ENCODE measurements at regions of chr2 and their contacts with region 1.

Region 1: GRCh38 chr2:144063602-144064001 is 456.3 kb downstream of the ZEB2 start:
- DNase-seq: no peak
- H3K4me3 ChIP-seq: no peak overlapping the region
- H3K27ac ChIP-seq: no peak overlapping the region
- H3K4me1 ChIP-seq: no peaks in the 10 kb centered on the region
- H3K27me3 ChIP-seq: no peaks in the 10 kb centered on the region
- CTCF ChIP-seq: no peak

Region 2: DNA sequence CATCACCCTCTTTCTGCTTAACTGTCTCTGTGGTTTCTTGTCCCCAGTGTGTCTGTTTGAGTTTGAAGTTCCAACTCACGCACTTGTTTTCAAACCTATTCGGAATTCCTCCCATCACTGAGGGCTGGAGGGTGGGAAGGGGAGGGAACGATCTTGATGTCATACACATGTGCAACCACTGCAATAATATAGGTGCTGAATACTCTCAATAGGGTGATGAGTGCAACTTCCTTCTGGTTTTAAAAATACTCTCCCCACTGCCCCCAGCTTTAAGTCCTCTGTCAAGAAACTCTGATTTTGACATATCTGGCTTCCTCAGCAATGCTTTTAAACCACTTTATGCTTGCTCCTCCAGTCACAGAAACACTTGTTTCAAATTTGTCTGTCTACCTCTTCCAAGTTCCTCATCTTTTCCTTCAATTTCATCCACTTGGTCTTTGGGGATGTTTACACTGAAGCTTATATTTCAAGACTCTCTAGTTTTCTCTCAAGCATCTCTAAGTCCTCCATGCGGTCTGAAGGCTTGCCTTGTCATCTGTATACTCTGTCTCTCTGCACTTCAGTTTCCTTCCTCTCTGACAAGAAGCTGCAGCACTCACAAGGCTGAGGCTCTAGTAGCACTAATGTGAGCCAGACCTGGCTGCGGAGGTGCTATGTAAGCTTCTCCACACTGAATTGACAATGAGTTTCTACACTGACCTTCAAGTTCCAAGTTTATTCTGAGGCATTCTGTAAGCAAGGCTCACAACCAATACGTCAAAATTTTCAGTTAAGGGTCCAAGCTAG is 34.0 kb after region 1 on chr2:
- CTCF ChIA-PET with region 1: no interaction called
- POLR2A ChIA-PET with region 1: no interaction called
- intact Hi-C with region 1: no loop called
- DNase-seq: no peak
- H3K4me3 ChIP-seq: no peak overlapping the region
- H3K27ac ChIP-seq: no peak overlapping the region
- H3K4me1 ChIP-seq: no peaks in the 10 kb centered on the region
- H3K27me3 ChIP-seq: no peaks in the 10 kb centered on the region
- CTCF ChIP-seq: no peak

Region 3: GRCh38 chr2:145235312-145235711 is 1171.7 kb after region 1 on chr2:
- CTCF ChIA-PET with region 1: no interaction called
- POLR2A ChIA-PET with region 1: interaction called, 11 read pairs
- intact Hi-C with region 1: no loop called
- DNase-seq: no peak
- H3K4me3 ChIP-seq: no peak overlapping the region
- H3K27ac ChIP-seq: no peak overlapping the region
- H3K4me1 ChIP-seq: no peaks in the 10 kb centered on the region
- H3K27me3 ChIP-seq: no peaks in the 10 kb centered on the region
- CTCF ChIP-seq: no peak

Measured in PC-9 (cell line).